MCF 10A (cell line): ENCODE measurements at regions of chr5 and their contacts with region 1.

Region 1: GRCh38 chr5:78648359-78649210 is at the start of gene LHFPL2:
- DNase-seq: peak; percentile 65
- H3K4me3 Mint-ChIP-seq: peak within 1 kb of the TSS; percentile 90
- H3K27ac Mint-ChIP-seq: peak within 1 kb of the TSS; percentile 94
- H3K4me1 Mint-ChIP-seq: peaks cover 35% of the 10 kb centered on the region
- H3K27me3 Mint-ChIP-seq: no peaks in the 10 kb centered on the region
- CTCF ChIP-seq: no peak
- total RNA-seq, gene LHFPL2: 45.9 and 93.3 TPM in 2 replicates

Region 2: GRCh38 chr5:78467752-78468357 is 180.7 kb before region 1 on chr5:
- CTCF ChIA-PET with region 1: interaction called, 9 read pairs
- POLR2A ChIA-PET with region 1: no interaction called
- intact Hi-C with region 1: loop called (anchors 2 kb)
- DNase-seq: peak; percentile 50
- H3K4me3 Mint-ChIP-seq: no peak overlapping the region
- H3K27ac Mint-ChIP-seq: no peak overlapping the region
- H3K4me1 Mint-ChIP-seq: peaks cover 5% of the 10 kb centered on the region
- H3K27me3 Mint-ChIP-seq: no peaks in the 10 kb centered on the region
- CTCF ChIP-seq: peak; percentile 70

Region 3: GRCh38 chr5:78638423-78638822 is 10.2 kb before region 1 on chr5:
- CTCF ChIA-PET with region 1: interaction called, 6 read pairs
- POLR2A ChIA-PET with region 1: interaction called, 40 read pairs
- intact Hi-C with region 1: no loop called
- DNase-seq: peak; percentile 98
- H3K4me3 Mint-ChIP-seq: peak overlapping the region; percentile 38
- H3K27ac Mint-ChIP-seq: peak overlapping the region; percentile 89
- H3K4me1 Mint-ChIP-seq: peaks cover 43% of the 10 kb centered on the region
- H3K27me3 Mint-ChIP-seq: no peaks in the 10 kb centered on the region
- CTCF ChIP-seq: no peak

Region 4: DNA sequence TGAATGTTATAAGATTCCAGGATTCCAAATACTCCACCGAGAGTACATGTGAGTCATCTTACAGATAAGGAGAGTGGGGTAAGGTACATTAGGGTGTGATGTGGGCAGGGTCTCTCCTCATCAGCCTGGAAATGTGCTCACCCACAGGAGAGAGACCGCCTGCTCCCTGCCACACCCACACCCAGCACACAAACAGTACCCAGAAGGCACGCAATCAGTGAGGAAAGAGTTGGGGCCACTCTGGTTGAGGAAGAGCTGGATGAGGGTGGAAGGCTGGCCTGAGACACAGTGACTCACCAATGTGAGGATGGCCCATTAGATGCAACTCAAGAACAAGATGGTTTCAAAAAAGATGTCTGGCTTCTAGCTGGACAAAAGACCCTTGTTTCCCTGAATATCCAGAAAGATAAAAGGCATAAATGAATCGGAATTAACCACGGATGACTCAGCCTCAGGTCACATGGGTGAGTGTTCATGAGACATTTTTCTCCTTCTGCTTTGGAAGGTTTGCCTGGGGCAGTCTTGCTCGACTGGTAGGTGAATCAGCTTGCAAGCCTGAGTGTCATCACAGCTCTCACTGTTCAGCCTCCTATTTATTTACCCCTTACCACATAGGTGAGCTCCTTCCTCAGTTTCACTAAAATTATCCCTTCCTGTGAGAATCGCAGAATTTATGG is 51.1 kb after region 1 on chr5:
- CTCF ChIA-PET with region 1: no interaction called
- POLR2A ChIA-PET with region 1: interaction called, 67 read pairs
- intact Hi-C with region 1: loop called (anchors 1 kb)
- DNase-seq: peak; percentile 99
- H3K4me3 Mint-ChIP-seq: peak overlapping the region; percentile 75
- H3K27ac Mint-ChIP-seq: peak overlapping the region; percentile 98
- H3K4me1 Mint-ChIP-seq: peaks cover 38% of the 10 kb centered on the region
- H3K27me3 Mint-ChIP-seq: no peaks in the 10 kb centered on the region
- CTCF ChIP-seq: no peak

Region 5: GRCh38 chr5:78886341-78887230 is 238.0 kb after region 1 on chr5:
- CTCF ChIA-PET with region 1: no interaction called
- POLR2A ChIA-PET with region 1: interaction called, 3 read pairs
- intact Hi-C with region 1: loop called (anchors 5 kb)
- DNase-seq: peak; percentile 34
- H3K4me3 Mint-ChIP-seq: no peak overlapping the region
- H3K27ac Mint-ChIP-seq: no peak overlapping the region
- H3K4me1 Mint-ChIP-seq: no peaks in the 10 kb centered on the region
- H3K27me3 Mint-ChIP-seq: no peaks in the 10 kb centered on the region
- CTCF ChIP-seq: peak; percentile 53